ENCODE measurements at regions of chr6 and their contacts with region 1.

Region 1: GRCh38 chr6:3449750-3450305 is 7.0 kb downstream of the SLC22A23 start:
- DNase-seq: no peak

Region 2: DNA sequence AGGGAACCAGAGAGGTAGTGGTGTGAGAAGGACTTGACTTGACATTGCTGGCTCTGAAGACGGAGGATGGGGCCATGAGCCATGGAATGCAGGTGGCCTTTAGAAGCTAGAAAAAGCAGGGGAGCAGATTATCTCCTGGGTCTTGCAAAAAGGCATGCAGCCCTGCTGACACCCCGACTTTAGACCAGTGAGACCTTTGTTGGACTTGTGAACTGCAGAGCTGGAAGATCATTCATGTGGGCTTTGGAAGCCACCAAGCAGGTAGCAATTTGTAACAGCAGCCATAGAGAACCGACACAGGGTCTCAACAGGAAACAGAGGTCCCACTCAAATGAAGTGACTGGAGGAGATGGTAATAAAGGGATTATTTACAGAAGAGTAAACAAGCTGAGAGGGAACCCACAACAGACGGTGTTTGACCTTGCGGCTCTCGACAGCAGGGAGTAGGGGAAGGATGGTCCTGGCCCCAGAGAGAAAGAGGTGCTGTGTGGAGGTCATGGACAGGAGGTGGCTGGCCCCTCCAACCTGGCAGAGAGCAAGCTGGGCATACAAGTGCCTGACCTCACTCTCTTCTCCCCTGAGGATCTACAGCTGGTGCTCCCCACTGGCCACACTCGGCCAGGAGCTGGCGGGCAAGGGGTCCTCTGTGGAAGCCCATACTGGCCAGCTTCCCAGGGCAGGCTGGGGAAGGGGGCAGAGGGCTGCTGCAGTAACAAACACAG is 36.9 kb before region 1 on chr6:
- intact Hi-C with region 1: loop called in 1 of 2 experiments (anchors 2 kb)
- DNase-seq: no peak

Measured in posterior vena cava (tissue), 2 donors.